Heart left ventricle (tissue), 16 donors: ENCODE measurements at regions of chr17 and their contacts with region 1.

Region 1: DNA sequence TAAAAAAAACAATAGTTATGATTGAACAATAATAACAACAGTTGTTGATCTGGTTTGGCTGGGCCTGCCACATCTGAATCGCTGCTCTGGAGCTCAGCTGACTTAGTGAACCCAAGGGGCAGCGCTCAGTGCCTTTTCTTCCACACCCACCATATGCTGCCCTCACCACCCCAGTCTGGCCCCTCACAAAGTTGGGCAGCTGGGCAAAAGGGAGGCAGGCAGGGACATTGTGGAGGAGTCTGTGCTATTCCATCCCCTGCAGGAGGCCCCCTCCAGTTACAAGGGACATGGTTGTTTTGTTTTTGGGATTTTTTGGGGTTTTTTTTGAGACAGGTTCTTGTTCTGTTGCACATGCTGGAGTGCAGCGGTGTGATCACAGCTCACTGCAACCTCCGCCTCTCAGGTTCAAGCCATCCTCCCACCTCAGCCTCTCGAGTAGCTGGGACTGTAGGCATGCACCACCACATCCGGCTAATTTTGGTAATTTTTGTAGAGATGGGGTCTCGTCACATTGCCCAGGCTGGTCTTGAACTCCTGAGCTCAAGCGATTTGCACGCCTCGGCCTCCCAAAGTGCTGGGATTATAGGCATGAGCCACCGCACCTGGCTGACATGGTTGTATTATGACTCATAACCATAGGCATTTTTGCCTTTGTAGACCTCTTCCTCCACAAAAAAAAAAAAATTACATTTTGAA is 8.6 kb upstream of the PECAM1 start:
- DNase-seq: no peak
- ATAC-seq: no peak
- H3K4me3 ChIP-seq: no peak overlapping the region
- H3K27ac ChIP-seq: peak overlapping the region in 1 of 12 donors; percentile 27
- H3K4me1 ChIP-seq: peaks cover 0 to 75% (median 0%) of the 10 kb centered on the region in 12 donors
- H3K27me3 ChIP-seq: no peaks in the 10 kb centered on the region
- CTCF ChIP-seq: no peak
- POLR2A ChIP-seq: no peak

Region 2: GRCh38 chr17:64331946-64332493 is 67.2 kb before region 1 on chr17:
- intact Hi-C with region 1: loop called in 1 of 10 experiments (anchors 10 kb)
- DNase-seq: peak in 4 of 5 donors; percentile 76 to 86 (median 78)
- ATAC-seq: peak; percentile 1 to 63 (median 46)
- H3K4me3 ChIP-seq: no peak overlapping the region
- H3K27ac ChIP-seq: peak overlapping the region; percentile 47 to 91 (median 75)
- H3K4me1 ChIP-seq: peaks cover 5 to 99% (median 78%) of the 10 kb centered on the region in 12 donors
- H3K27me3 ChIP-seq: no peaks in the 10 kb centered on the region
- CTCF ChIP-seq: no peak
- POLR2A ChIP-seq: no peak

Region 3: DNA sequence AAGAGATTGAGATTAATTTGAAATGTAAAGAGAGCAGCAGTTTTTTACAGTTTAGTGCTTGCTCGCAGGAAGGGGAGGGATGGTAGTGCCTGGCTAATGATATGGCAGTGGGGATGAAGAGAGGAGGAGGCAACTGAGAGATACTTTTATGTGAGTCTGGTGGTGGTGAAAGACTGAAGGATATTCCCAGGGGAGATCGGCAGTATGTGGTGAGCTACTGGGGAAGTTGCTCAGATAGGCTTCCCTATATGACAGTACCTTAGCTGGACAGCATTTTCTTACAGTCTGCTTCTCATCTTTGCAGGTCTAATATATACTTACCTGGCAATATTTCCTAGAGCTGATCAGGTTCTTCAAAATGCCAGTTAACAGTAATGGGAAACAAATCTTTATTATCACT is 116.2 kb after region 1 on chr17:
- intact Hi-C with region 1: no loop called
- DNase-seq: no peak
- ATAC-seq: no peak
- H3K4me3 ChIP-seq: no peak overlapping the region
- H3K27ac ChIP-seq: no peak overlapping the region
- H3K4me1 ChIP-seq: no peaks in the 10 kb centered on the region
- H3K27me3 ChIP-seq: no peaks in the 10 kb centered on the region
- CTCF ChIP-seq: no peak
- POLR2A ChIP-seq: no peak

Region 4: GRCh38 chr17:64653325-64653984 is 254.2 kb after region 1 on chr17:
- intact Hi-C with region 1: no loop called
- DNase-seq: no peak
- ATAC-seq: no peak
- H3K4me3 ChIP-seq: no peak overlapping the region
- H3K27ac ChIP-seq: no peak overlapping the region
- H3K4me1 ChIP-seq: peaks cover 0 to 52% (median 6%) of the 10 kb centered on the region in 12 donors
- H3K27me3 ChIP-seq: no peaks in the 10 kb centered on the region
- CTCF ChIP-seq: no peak
- POLR2A ChIP-seq: no peak